CD4-positive, alpha-beta T cell (primary cell): ENCODE measurements at regions of chr12 and their contacts with region 1.

Region 1: DNA sequence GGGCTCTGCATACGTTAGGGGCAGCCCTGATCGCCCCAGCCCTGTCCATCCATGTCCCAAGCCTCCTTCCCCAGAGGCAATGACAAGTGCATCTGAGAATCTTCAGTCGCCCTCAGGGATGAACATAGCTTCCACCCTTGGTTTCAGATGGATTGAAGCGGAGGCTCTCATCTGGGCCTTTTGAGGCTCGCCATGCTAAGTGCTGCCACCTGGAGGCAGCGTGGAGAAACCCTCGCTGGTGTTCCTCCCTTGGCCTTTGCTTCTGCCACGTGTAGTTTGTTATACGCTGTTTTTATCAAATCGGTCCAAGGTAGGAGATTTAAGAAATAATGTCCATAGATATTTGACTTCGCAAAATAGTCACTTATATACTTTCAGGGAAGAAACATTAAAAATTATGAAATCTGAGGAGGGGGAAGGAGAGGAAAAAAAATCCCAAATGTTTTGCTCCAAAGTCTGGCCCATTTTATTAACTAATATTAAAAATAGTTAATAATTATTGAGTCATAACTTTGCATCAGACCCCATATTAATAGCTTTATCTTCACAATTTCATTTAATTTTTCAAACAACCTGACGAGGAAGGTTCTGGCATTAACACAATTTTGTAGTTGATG is 28.8 kb upstream of the LRRC10 start:
- DNase-seq: peak; percentile 22 to 78 (median 44)
- ATAC-seq: peak; percentile 79
- H3K4me3 ChIP-seq: no peak overlapping the region
- H3K4me3 Mint-ChIP-seq: no peak overlapping the region
- H3K27ac ChIP-seq: no peak overlapping the region
- H3K27ac Mint-ChIP-seq: no peak overlapping the region
- H3K4me1 ChIP-seq: no peaks in the 10 kb centered on the region
- H3K4me1 Mint-ChIP-seq: no peaks in the 10 kb centered on the region
- H3K27me3 ChIP-seq: no peaks in the 10 kb centered on the region
- H3K27me3 Mint-ChIP-seq: no peaks in the 10 kb centered on the region
- CTCF ChIP-seq: peak; percentile 72

Region 2: GRCh38 chr12:69290545-69291277 is 348.8 kb before region 1 on chr12:
- CTCF ChIA-PET with region 1: interaction called, 5 read pairs
- POLR2A ChIA-PET with region 1: no interaction called
- intact Hi-C with region 1: loop called (anchors 1 kb)
- DNase-seq: peak; percentile 70 to 91 (median 78)
- ATAC-seq: peak; percentile 100
- H3K4me3 ChIP-seq: no peak overlapping the region
- H3K4me3 Mint-ChIP-seq: no peak overlapping the region
- H3K27ac ChIP-seq: no peak overlapping the region
- H3K27ac Mint-ChIP-seq: no peak overlapping the region
- H3K4me1 ChIP-seq: peaks cover 7% of the 10 kb centered on the region
- H3K4me1 Mint-ChIP-seq: peaks cover 6% of the 10 kb centered on the region
- H3K27me3 ChIP-seq: no peaks in the 10 kb centered on the region
- H3K27me3 Mint-ChIP-seq: peaks cover 35% of the 10 kb centered on the region
- CTCF ChIP-seq: peak; percentile 93

Region 3: DNA sequence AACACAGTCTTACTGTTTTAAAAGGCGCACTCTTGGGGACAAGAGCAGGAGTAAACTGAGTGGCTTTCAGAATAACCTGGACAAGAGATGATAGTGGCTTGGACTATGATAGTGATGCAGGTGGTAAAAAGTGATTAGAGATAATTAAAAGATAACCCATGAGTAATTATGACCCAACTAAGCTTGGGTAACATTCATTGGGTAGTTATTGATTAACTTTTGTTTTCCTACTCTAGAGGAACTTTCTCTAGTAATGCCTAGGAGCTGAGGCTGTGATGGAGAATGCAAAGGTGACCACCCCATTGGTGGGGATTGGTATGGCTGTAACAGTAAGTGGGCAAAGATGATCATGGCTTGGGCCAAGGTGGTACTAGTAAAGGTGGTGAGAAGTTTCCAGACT is 191.6 kb before region 1 on chr12:
- CTCF ChIA-PET with region 1: no interaction called
- POLR2A ChIA-PET with region 1: no interaction called
- intact Hi-C with region 1: no loop called
- DNase-seq: no peak
- ATAC-seq: no peak
- H3K4me3 ChIP-seq: no peak overlapping the region
- H3K4me3 Mint-ChIP-seq: no peak overlapping the region
- H3K27ac ChIP-seq: no peak overlapping the region
- H3K27ac Mint-ChIP-seq: no peak overlapping the region
- H3K4me1 ChIP-seq: no peaks in the 10 kb centered on the region
- H3K4me1 Mint-ChIP-seq: no peaks in the 10 kb centered on the region
- H3K27me3 ChIP-seq: no peaks in the 10 kb centered on the region
- H3K27me3 Mint-ChIP-seq: no peaks in the 10 kb centered on the region
- CTCF ChIP-seq: no peak

Region 4: DNA sequence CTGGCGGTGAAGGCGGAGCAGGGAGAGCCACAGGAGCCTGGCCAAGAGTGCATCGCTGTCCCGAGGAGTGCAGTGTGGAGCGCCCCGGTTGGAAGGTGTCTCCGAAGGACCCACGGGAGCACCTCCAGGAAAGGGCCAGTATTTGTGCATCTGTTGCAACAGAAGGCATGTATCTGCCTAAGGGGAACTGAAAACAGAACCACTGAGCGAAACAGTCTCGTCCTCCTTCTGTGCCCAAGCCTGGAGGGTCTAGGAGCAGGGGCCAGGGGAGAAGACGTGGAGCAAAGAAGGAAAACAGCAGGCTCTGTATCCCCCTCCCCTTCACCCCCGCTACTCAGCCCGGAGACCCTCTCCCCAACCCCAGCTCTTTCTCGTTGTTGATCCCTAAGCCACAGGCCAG is 23.5 kb before region 1 on chr12:
- CTCF ChIA-PET with region 1: no interaction called
- POLR2A ChIA-PET with region 1: no interaction called
- intact Hi-C with region 1: no loop called
- DNase-seq: no peak
- ATAC-seq: no peak
- H3K4me3 ChIP-seq: no peak overlapping the region
- H3K4me3 Mint-ChIP-seq: no peak overlapping the region
- H3K27ac ChIP-seq: no peak overlapping the region
- H3K27ac Mint-ChIP-seq: no peak overlapping the region
- H3K4me1 ChIP-seq: no peaks in the 10 kb centered on the region
- H3K4me1 Mint-ChIP-seq: no peaks in the 10 kb centered on the region
- H3K27me3 ChIP-seq: no peaks in the 10 kb centered on the region
- H3K27me3 Mint-ChIP-seq: peaks cover 18% of the 10 kb centered on the region
- CTCF ChIP-seq: no peak